Panc1 (cell line): ENCODE measurements at regions of chr10 and their contacts with region 1.

Region 1: DNA sequence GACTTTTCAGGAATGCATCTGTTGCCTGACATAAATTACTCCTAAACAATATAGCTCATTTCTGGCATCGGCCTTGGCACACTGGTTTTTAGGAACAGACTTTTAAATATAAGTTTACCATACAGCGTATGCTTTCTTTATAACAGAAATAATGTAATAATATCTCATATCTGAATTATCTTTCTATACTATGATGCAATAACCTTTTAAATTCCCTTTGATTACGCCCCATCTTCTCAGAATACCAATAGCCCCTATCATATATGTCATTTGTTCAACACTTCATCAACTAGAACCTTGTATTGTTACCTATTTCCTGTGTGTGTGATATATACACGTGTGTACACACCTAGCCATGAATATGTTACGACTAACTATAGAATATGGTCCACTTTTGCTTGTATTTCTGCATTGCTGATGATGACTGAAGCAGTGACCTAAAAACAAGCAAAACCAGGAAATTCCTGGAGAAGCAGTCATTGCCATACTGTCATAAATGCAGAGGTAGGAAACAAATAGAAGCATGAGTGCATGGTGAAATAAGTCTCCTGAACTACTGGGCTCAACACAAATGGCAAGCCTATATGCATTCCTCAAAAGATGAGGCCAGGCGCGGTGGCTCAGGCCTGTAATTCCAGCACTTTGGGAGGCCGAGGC is 618.4 kb upstream of the NRP1 start:
- DNase-seq: no peak
- ATAC-seq: no peak
- H3K4me3 ChIP-seq: no peak overlapping the region
- H3K27ac ChIP-seq: no peak overlapping the region
- H3K4me1 ChIP-seq: no peaks in the 10 kb centered on the region
- H3K27me3 ChIP-seq: no peaks in the 10 kb centered on the region
- CTCF ChIP-seq: no peak

Region 2: DNA sequence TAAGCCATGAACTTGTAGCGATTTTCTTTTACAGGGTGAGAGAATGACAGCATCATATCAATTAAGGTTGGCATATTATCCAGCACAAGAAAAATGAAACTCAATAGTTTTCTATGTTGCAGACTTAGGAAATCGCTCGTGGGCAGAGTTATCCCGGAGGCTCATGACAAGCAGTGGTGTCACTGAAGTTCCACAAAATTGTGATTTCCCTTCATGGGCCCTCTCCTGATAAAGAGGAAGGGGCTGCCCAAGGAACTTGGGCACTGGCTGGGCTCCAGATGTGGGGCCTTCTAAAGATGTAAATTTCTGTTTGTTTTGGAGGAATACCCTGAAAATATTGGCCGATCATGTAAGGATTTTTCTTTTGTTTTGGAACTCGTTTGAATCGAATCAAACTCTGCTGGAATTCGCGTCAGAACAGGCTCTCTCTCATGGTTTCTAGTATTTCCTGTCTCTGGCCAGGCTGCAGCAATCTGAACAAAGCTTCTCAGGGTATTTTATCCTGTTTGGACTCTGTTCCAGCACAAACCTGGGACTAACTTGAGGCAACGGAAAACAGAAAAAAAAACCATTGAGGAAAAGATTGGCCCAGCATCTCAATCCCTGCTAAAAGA is 277.7 kb before region 1 on chr10:
- CTCF ChIA-PET with region 1: no interaction called
- POLR2A ChIA-PET with region 1: no interaction called
- in situ Hi-C with region 1: no loop called
- intact Hi-C with region 1: no loop called
- DNase-seq: no peak
- ATAC-seq: no peak
- H3K4me3 ChIP-seq: no peak overlapping the region
- H3K27ac ChIP-seq: no peak overlapping the region
- H3K4me1 ChIP-seq: no peaks in the 10 kb centered on the region
- H3K27me3 ChIP-seq: no peaks in the 10 kb centered on the region
- CTCF ChIP-seq: no peak

Region 3: GRCh38 chr10:33884604-33885187 is 68.1 kb before region 1 on chr10:
- CTCF ChIA-PET with region 1: no interaction called
- POLR2A ChIA-PET with region 1: interaction called, 15 read pairs
- in situ Hi-C with region 1: no loop called
- intact Hi-C with region 1: no loop called
- DNase-seq: no peak
- ATAC-seq: no peak
- H3K4me3 ChIP-seq: no peak overlapping the region
- H3K27ac ChIP-seq: no peak overlapping the region
- H3K4me1 ChIP-seq: no peaks in the 10 kb centered on the region
- H3K27me3 ChIP-seq: no peaks in the 10 kb centered on the region
- CTCF ChIP-seq: no peak

Region 4: GRCh38 chr10:34181553-34182300 is 228.9 kb after region 1 on chr10:
- CTCF ChIA-PET with region 1: no interaction called
- POLR2A ChIA-PET with region 1: no interaction called
- in situ Hi-C with region 1: no loop called
- intact Hi-C with region 1: no loop called
- DNase-seq: no peak
- ATAC-seq: no peak
- H3K4me3 ChIP-seq: no peak overlapping the region
- H3K27ac ChIP-seq: no peak overlapping the region
- H3K4me1 ChIP-seq: peaks cover 9% of the 10 kb centered on the region; the same call in 1 of the 2 replicates
- H3K27me3 ChIP-seq: no peaks in the 10 kb centered on the region
- CTCF ChIP-seq: no peak